ENCODE measurements at regions of chr1 and their contacts with region 1.

Region 1: GRCh38 chr1:85240174-85240601 is 19.3 kb downstream of the C1orf52 start:
- DNase-seq: peak; percentile 28
- CTCF ChIP-seq: peak; percentile 34

Region 2: DNA sequence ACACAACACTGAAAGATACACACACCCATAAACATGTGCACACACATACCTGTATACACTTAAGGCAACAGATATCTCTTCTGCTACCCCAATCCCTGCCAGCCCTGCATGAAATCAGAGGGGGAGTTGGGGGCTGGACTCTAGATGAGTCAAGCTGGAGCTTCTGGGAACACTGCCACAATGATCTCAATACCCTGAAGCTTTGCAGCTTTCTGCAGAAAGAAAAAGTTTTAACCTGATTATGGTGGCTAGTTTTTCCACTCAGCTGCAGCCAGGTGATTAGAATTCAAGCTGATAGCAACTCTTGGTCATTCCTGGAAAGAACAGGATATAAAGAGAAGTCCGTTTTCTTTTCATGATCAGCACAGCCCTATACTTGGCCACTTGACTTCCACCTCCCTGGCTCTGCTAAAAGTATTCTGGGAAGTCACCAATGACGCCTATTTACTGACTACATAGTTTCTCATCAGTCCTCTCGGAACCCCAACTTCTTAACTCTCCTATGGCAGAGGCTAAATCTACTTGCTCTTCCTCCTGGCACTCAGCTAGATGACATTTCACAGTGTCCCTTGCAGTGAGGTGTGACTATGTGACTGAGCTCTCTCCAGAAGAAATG is 862.6 kb before region 1 on chr1:
- in situ Hi-C with region 1: no loop called
- DNase-seq: no peak
- CTCF ChIP-seq: no peak

Region 3: GRCh38 chr1:85109475-85109874 is 130.7 kb before region 1 on chr1:
- in situ Hi-C with region 1: loop called (anchors 25 kb)
- DNase-seq: peak; percentile 59
- CTCF ChIP-seq: peak; percentile 61